PC-9 (cell line): ENCODE measurements at regions of chr16 and their contacts with region 1.

Region 1: GRCh38 chr16:3003582-3004302 is 9.0 kb upstream of the CLDN9 start:
- DNase-seq: peak; percentile 96 to 100
- H3K4me3 ChIP-seq: no peak overlapping the region; the same call in 1 of the 2 replicates
- H3K27ac ChIP-seq: no peak overlapping the region
- H3K4me1 ChIP-seq: peaks cover 33% of the 10 kb centered on the region
- H3K27me3 ChIP-seq: no peaks in the 10 kb centered on the region
- CTCF ChIP-seq: peak; percentile 61

Region 2: GRCh38 chr16:2897113-2897512 is 106.6 kb before region 1 on chr16:
- CTCF ChIA-PET with region 1: no interaction called
- POLR2A ChIA-PET with region 1: no interaction called
- intact Hi-C with region 1: no loop called
- DNase-seq: no peak
- H3K4me3 ChIP-seq: no peak overlapping the region
- H3K27ac ChIP-seq: no peak overlapping the region
- H3K4me1 ChIP-seq: no peaks in the 10 kb centered on the region
- H3K27me3 ChIP-seq: no peaks in the 10 kb centered on the region
- CTCF ChIP-seq: no peak

Region 3: DNA sequence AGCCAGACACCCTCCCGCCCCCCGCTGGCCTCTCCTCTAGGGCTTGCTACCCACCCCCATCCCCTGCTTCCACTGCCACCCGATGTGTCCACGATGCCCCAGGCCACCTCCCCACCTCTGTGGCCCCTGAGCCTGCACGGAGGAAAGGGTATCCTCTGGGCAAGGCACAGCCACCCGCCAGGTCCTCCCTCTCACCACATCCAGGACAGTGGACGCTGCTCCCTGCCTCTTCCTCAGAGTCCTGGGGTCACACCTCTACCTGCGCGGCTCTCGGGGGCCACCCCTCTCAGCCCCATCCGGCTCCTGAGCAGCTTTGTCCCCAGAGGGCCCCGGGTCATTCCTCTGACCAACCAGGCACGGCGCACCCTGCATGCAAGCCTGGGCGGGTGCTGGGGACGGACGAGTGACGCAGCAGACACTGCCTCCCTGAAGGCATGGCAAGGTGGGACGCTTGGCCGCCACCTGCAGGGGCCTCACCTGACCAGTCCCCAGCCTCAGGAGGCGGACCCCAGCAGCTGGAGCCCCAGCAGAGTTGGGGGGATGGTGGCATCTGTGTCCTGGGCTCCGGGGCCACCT is 67.2 kb before region 1 on chr16:
- CTCF ChIA-PET with region 1: no interaction called
- POLR2A ChIA-PET with region 1: no interaction called
- intact Hi-C with region 1: no loop called
- DNase-seq: no peak
- H3K4me3 ChIP-seq: no peak overlapping the region
- H3K27ac ChIP-seq: no peak overlapping the region
- H3K4me1 ChIP-seq: no peaks in the 10 kb centered on the region
- H3K27me3 ChIP-seq: no peaks in the 10 kb centered on the region
- CTCF ChIP-seq: no peak

Region 4: DNA sequence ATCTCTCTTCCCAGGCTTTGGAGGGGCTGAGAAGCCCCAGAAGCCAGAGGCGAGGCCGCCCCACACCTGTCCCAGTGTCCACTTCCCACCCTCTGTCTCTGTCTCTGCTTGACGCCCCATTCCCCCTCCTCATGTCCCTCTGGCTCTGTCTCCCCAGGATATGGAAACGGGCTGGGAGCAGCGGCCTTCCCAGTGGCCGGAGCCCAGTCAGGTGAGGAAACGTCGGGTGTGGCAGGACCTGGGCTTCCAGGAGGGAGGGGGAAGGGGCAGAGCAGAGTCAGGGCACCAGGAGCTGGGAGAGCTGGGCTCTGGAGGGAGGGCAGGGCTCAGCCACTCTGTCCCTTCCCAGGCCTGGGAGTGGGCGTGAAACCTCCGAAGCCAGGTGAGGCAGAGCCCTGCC is 12.9 kb before region 1 on chr16:
- CTCF ChIA-PET with region 1: interaction called, 3 read pairs
- POLR2A ChIA-PET with region 1: interaction called, 8 read pairs
- intact Hi-C with region 1: loop called (anchors 1 kb)
- DNase-seq: peak in 1 of 2 experiments; percentile 87
- H3K4me3 ChIP-seq: no peak overlapping the region
- H3K27ac ChIP-seq: no peak overlapping the region
- H3K4me1 ChIP-seq: peaks cover 23% of the 10 kb centered on the region; the same call in 1 of the 2 replicates
- H3K27me3 ChIP-seq: no peaks in the 10 kb centered on the region
- CTCF ChIP-seq: no peak

Region 5: DNA sequence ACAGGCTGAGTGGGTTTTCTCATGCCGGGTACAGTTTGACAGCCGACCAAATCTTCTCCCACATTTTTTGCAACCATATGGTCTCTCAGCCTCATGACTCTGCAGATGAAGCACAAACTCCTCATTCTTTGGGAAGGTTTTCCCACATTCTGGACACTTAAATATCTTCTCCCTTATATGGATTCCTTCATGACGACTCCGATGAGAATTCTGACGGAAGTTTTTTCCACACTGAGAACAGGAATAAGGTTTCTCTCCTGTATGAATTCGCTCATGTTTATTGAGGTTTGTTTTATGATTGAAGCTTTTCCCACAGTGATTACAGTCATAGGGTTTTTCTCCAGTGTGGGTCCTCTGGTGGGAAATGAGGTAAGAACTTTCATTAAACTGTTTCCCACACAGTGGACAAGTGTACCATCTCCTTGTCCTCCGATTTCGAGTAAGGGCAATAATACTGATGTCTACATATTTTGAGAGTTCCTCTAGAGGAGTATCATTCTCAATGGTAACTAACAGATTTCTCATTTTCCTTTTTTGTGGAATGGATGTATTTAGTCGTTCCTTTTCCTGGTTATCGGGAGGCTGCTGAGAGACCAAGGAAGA is 220.3 kb after region 1 on chr16:
- CTCF ChIA-PET with region 1: no interaction called
- POLR2A ChIA-PET with region 1: no interaction called
- intact Hi-C with region 1: no loop called
- DNase-seq: no peak
- H3K4me3 ChIP-seq: peak overlapping the region; percentile 2; the same call in 1 of the 2 replicates
- H3K27ac ChIP-seq: no peak overlapping the region
- H3K4me1 ChIP-seq: no peaks in the 10 kb centered on the region
- H3K27me3 ChIP-seq: no peaks in the 10 kb centered on the region
- CTCF ChIP-seq: no peak